ENCODE measurements at regions of chr17 and their contacts with region 1.

Region 1: GRCh38 chr17:36591434-36592315 is at the start of gene DHRS11:
- DNase-seq: peak; percentile 87
- H3K4me3 ChIP-seq: peak within 1 kb of the TSS; percentile 74 to 84
- H3K27ac ChIP-seq: peak within 1 kb of the TSS in 1 of 2 donors; percentile 68
- H3K4me1 ChIP-seq: peaks cover 12% of the 10 kb centered on the region
- H3K27me3 ChIP-seq: no peaks in the 10 kb centered on the region
- CTCF ChIP-seq: no peak
- POLR2A ChIP-seq: no peak
- total RNA-seq, gene DHRS11: 13.9 to 17.6 TPM

Region 2: DNA sequence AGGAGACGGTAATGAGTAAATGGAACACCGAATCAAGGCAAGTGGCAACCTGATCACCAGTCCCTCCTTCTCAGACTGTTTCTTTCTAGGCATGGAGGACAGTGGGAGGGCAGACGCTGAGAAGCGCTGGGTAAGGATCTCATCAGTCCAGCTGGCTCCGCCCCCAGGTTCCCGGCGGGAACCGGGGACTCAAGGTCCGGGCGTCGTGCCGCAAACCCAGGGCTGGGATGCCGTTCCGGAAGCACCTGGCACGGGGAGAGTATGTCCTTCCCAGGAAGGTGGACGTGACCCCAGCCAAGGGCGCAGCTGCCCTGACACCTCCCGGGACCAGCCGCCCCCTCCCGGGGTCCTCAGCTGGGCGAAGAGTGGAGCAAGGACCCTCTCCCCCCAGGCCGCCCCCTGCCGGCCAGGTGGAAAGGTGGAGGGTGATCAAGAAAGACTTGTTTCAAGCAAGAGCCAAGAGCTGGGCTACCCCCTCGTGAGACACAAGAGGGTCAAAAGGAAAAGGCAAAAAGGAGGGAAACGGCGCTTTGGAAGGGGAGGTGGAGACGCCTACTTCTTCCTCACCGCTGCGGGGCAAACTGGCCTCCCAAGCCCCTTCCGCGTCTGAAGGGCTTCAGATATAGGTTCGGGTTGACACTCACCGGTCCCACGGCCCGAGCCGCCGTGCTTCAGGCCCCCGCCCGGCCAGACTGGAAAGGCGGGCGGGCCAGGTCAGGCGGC is 57.4 kb before region 1 on chr17:
- intact Hi-C with region 1: no loop called
- DNase-seq: peak; percentile 72
- H3K4me3 ChIP-seq: peak overlapping the region; percentile 83 to 89
- H3K27ac ChIP-seq: peak overlapping the region; percentile 86 to 88
- H3K4me1 ChIP-seq: peaks cover 8% of the 10 kb centered on the region
- H3K27me3 ChIP-seq: no peaks in the 10 kb centered on the region
- CTCF ChIP-seq: peak in 2 of 3 experiments; percentile 32 to 46
- POLR2A ChIP-seq: no peak

Region 3: DNA sequence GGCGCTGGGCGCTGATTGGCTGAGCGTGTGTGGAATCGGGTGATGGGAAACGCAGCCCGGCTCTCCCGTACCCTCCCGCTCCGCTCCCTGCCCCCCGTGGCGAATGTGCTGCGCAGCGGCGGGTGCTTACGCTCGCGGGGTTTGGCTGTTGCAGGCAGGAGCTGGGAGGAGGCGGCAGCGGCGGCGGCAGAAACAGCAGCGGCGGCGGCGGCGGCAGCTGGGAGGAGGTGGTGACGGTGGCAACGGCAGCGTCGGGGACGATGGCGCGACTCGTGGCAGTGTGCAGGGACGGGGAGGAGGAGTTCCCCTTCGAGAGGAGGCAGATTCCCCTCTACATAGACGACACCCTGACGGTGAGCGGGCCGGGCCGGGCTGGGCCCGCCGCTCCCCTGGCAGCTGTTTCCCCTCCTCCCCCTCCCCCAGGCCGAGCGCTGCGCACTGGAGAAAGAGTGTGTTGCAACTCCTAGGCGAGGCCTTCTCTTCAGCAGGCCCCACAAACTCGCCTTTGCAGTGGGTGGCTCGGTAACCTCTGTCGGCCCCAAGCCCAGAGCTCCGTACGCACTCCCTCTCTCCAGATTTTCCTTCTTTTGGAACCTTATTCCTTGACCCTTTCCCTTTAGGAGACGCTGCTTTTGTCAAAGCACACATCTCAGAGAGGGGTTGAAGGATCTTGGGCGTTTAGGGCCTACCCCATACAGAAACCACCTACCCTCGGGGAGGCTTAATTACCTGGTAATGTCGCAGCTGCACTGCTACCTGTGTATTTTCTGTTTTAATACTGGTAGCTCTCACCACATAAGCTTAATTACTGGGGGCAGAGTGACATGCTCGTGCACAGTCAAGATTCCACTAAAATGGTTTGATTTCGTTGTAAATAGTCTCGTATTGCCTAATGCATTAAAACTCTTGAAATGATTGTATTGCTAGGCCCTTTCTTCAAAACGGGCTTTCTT is 45.9 kb before region 1 on chr17:
- intact Hi-C with region 1: loop called (anchors 10 kb)
- DNase-seq: peak; percentile 97
- H3K4me3 ChIP-seq: peak overlapping the region; percentile 92 to 96
- H3K27ac ChIP-seq: peak overlapping the region; percentile 97 to 100
- H3K4me1 ChIP-seq: peaks cover 35% of the 10 kb centered on the region
- H3K27me3 ChIP-seq: no peaks in the 10 kb centered on the region
- CTCF ChIP-seq: no peak
- POLR2A ChIP-seq: peak; percentile 10